ENCODE measurements at regions of chr20 and their contacts with region 1.

Region 1: DNA sequence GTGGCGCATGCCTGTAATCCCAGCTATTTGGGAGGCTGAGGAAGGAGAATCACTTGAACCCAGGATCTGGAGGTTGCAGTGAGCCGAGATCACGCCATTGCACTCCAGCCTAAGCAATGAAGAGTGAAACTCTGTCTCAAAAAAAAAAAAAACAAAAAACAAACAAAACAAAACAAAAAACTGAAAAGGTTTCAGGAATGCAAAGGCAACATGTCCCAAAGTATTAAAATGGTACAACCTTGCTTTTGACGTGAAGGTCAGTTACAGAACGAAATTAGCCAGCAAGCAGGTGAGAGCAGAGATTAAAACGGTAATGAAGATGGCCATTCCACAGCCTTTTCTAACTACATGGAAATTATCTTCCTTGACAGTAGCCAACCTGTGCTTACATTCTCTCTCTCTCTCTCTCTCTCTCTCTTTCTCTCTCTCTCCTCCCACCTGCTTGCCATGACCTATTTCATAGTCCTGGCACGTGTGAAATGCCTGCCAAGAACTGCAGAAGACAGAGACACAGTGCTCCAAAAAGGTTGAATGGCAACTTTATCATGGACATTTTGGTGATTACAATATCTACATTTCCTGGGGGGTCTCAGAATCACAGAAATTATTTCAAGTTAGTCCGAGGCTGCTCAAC is 38.4 kb upstream of the SALL4 start:
- DNase-seq: no peak
- H3K4me3 ChIP-seq: no peak overlapping the region
- H3K27ac ChIP-seq: no peak overlapping the region
- H3K4me1 ChIP-seq: no peaks in the 10 kb centered on the region
- H3K27me3 ChIP-seq: no peaks in the 10 kb centered on the region
- CTCF ChIP-seq: no peak

Region 2: GRCh38 chr20:51854908-51855307 is 14.2 kb after region 1 on chr20:
- CTCF ChIA-PET with region 1: interaction called, 14 read pairs
- POLR2A ChIA-PET with region 1: no interaction called
- intact Hi-C with region 1: no loop called
- DNase-seq: peak in 1 of 2 experiments; percentile 50
- H3K4me3 ChIP-seq: no peak overlapping the region
- H3K27ac ChIP-seq: no peak overlapping the region
- H3K4me1 ChIP-seq: 0 out of 2 replicates have a peak, but pooled peaks cover under 1% of the 10 kb centered on the region
- H3K27me3 ChIP-seq: no peaks in the 10 kb centered on the region
- CTCF ChIP-seq: no peak

Region 3: DNA sequence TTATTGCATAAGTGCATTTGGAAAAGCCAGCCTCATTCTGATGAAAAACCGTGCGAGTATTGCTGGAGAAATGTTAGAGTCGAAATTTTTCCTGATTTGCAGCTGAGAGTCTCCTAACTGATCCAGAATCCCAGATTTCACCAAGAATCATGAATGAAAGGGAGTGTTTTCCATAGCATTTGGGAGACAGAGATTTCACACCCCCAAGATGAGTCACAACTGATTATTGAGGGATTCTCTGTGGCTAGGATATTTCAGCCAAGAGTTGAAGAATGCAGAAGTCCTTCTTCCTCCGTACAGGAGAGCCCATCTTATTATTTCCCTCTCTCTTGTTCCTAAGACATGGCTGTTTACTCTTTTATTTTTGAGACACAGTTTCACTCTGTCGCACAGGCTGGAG is 43.8 kb after region 1 on chr20:
- CTCF ChIA-PET with region 1: interaction called, 12 read pairs
- POLR2A ChIA-PET with region 1: no interaction called
- intact Hi-C with region 1: no loop called
- DNase-seq: no peak
- H3K4me3 ChIP-seq: no peak overlapping the region
- H3K27ac ChIP-seq: no peak overlapping the region
- H3K4me1 ChIP-seq: 0 out of 2 replicates have a peak, but pooled peaks cover 5% of the 10 kb centered on the region
- H3K27me3 ChIP-seq: no peaks in the 10 kb centered on the region
- CTCF ChIP-seq: no peak